Activated B cell treated with CpG ODN at 0.5 μM for 24 hours (primary cell): ENCODE measurements at regions of chr10 and their contacts with region 1.

Region 1: GRCh38 chr10:96608805-96609204 is 22.0 kb upstream of the TM9SF3 start:
- DNase-seq: no peak
- ATAC-seq: no peak
- H3K4me3 Mint-ChIP-seq: no peak overlapping the region
- H3K27ac Mint-ChIP-seq: no peak overlapping the region
- H3K4me1 Mint-ChIP-seq: no peaks in the 10 kb centered on the region
- H3K27me3 Mint-ChIP-seq: no peaks in the 10 kb centered on the region
- CTCF ChIP-seq: no peak

Region 2: GRCh38 chr10:96374985-96375830 is 233.6 kb before region 1 on chr10:
- CTCF ChIA-PET with region 1: no interaction called
- POLR2A ChIA-PET with region 1: interaction called, 16 read pairs
- intact Hi-C with region 1: no loop called
- DNase-seq: peak; percentile 61
- ATAC-seq: peak; percentile 92
- H3K4me3 Mint-ChIP-seq: peak overlapping the region; percentile 78
- H3K27ac Mint-ChIP-seq: no peak overlapping the region
- H3K4me1 Mint-ChIP-seq: peaks cover 6% of the 10 kb centered on the region
- H3K27me3 Mint-ChIP-seq: peaks cover 13% of the 10 kb centered on the region
- CTCF ChIP-seq: peak; percentile 84